Astrocyte of the cerebellum (primary cell): ENCODE measurements at regions of chr12 and their contacts with region 1.

Region 1: DNA sequence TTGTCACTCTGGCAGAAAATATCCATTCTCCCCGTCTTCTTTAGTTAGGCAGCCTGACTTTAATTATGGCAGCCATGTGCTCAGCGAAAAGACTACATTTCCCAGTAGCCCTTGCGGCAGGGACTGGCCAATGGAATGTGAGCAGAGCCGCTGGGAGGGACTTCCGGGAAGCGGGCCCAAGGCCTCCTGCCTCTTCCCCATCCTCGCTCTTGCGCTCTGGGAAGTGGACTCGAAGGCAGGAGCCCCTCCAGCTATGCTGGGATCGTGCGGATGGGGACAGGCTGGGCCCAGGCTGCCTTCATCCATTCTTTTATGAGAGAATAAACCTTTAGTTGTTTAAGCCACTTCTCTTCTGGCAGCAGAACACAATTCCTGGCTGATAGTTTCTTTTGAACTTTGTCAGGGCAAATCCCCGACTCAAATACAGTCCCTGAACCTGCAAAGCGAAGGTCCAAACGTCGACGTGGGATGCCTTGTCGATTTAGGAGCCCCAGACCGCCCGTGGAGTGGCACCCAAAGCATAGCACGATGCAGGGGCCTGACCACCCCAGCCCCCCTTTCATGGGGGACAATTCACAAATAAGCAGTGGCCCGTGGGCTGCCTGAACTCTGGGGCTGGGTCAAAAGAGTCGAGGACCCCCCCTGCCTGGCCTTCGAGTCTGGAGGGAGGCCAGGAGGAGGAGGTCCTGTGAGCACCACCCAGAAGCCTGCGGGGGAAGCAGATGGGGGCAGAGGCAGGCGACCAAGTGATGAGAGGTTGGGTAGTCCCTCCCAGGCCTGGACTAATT is 15.6 kb upstream of the LRTM2 start:
- DNase-seq: peak; percentile 64
- H3K4me3 ChIP-seq: no peak overlapping the region
- CTCF ChIP-seq: no peak

Region 2: DNA sequence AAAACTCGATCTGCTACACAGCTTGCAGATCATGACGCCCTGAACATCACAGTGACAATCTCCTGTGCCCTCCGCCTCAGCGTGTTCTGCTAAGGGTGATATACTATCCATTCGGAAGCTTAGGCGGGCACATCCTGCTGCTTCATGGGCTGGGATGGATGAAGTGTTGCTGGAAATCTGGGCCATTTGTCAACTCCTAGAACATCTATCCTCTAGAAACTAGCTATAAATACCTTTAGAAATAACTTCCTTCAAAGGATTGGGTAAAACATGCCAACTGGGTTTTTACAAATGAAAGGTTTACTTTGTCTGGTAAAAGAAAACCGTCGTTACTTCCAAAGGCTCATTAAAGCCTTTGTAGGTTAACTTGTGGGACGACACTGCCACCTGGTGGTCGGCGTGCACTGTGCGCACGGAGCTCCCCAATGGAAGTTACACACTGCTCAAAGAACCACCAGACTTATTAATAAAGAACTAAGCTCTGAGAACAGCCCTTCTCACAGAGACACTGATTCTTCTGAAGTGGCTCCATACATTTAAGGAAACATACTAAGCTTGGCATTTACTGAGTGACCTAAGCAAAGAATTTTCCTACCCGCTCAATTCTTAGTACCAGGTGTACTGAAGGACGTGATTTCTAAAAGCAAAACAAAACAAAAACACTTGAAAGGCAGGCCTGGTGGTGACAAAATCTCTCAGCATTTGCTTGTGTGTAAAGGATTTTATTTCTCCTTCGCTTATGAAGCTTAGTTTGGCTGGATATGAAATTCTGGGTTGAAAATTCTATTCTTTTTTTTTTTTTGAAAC is 135.3 kb after region 1 on chr12:
- in situ Hi-C with region 1: loop called (anchors 25 kb)
- DNase-seq: peak; percentile 76
- H3K4me3 ChIP-seq: no peak overlapping the region
- CTCF ChIP-seq: peak; percentile 91